MCF 10A (cell line): ENCODE measurements at regions of chr20 and their contacts with region 1.

Region 1: DNA sequence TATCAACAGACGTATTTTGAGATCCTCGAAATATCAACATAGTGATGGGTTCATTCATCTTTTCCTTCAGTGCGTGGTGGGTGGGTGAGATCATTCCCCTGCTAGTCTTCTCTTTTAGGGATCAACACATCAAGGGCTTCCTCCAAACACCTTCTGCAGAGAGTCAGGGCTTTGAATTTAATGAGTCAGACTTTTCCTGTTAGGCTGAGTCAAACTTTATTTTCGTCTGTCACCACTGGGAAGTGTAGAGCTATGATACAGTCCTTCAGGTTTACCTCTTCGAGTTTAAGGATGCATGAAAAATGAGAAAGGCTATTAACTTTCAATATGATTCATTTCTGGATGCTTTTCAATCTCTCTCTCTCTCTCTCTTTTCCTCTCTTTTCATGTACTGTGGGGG is 189.1 kb downstream of the BMP2 start:
- DNase-seq: peak; percentile 68
- H3K4me3 Mint-ChIP-seq: no peak overlapping the region
- H3K27ac Mint-ChIP-seq: peak overlapping the region; percentile 43
- H3K4me1 Mint-ChIP-seq: peaks cover 28% of the 10 kb centered on the region
- H3K27me3 Mint-ChIP-seq: no peaks in the 10 kb centered on the region
- CTCF ChIP-seq: no peak

Region 2: DNA sequence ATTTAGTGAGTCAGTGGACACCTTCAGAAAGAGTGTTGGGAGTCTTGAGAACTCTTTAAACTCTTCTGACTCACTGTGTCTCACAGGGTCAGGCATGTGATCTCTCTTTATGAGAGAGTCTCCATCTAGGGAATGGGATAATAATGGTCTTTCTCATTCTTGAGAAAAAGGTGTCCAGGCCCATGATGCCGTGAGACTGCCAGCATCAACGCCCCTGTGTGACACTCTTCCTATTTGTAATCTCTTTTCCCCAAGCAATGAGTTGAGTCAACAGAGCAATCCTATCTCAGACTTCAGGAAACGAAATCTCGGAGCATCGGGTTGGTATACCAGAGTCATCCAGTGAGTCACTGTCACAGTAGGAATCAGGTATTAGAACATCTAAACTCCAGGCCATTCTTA is 271.4 kb before region 1 on chr20:
- CTCF ChIA-PET with region 1: no interaction called
- POLR2A ChIA-PET with region 1: no interaction called
- intact Hi-C with region 1: no loop called
- DNase-seq: peak; percentile 64
- H3K4me3 Mint-ChIP-seq: no peak overlapping the region
- H3K27ac Mint-ChIP-seq: peak overlapping the region; percentile 77
- H3K4me1 Mint-ChIP-seq: peaks cover 14% of the 10 kb centered on the region
- H3K27me3 Mint-ChIP-seq: no peaks in the 10 kb centered on the region
- CTCF ChIP-seq: no peak

Region 3: GRCh38 chr20:6940046-6940445 is 16.5 kb before region 1 on chr20:
- CTCF ChIA-PET with region 1: interaction called, 11 read pairs
- POLR2A ChIA-PET with region 1: interaction called, 10 read pairs
- intact Hi-C with region 1: no loop called
- DNase-seq: peak; percentile 45
- H3K4me3 Mint-ChIP-seq: no peak overlapping the region
- H3K27ac Mint-ChIP-seq: peak overlapping the region; percentile 49
- H3K4me1 Mint-ChIP-seq: no peaks in the 10 kb centered on the region
- H3K27me3 Mint-ChIP-seq: no peaks in the 10 kb centered on the region
- CTCF ChIP-seq: peak; percentile 45

Region 4: GRCh38 chr20:6966721-6967120 is 10.1 kb after region 1 on chr20:
- CTCF ChIA-PET with region 1: interaction called, 4 read pairs
- POLR2A ChIA-PET with region 1: interaction called, 10 read pairs
- intact Hi-C with region 1: no loop called
- DNase-seq: no peak
- H3K4me3 Mint-ChIP-seq: no peak overlapping the region
- H3K27ac Mint-ChIP-seq: no peak overlapping the region
- H3K4me1 Mint-ChIP-seq: peaks cover 13% of the 10 kb centered on the region
- H3K27me3 Mint-ChIP-seq: no peaks in the 10 kb centered on the region
- CTCF ChIP-seq: no peak